Activated CD4-positive, alpha-beta memory T cell treated with anti-CD3 and anti-CD28 coated beads for 36 hours (primary cell): ENCODE measurements at regions of chr20 and their contacts with region 1.

Region 1: GRCh38 chr20:50120897-50121693 is 8.1 kb upstream of the UBE2V1 start:
- DNase-seq: peak; percentile 76
- H3K4me3 Mint-ChIP-seq: no peak overlapping the region
- H3K27ac Mint-ChIP-seq: no peak overlapping the region
- H3K4me1 Mint-ChIP-seq: peaks cover 8% of the 10 kb centered on the region
- H3K27me3 Mint-ChIP-seq: no peaks in the 10 kb centered on the region

Region 2: GRCh38 chr20:50133474-50134217 is 12.6 kb after region 1 on chr20:
- CTCF ChIA-PET with region 1: interaction called, 13 read pairs
- POLR2A ChIA-PET with region 1: interaction called, 3 read pairs
- intact Hi-C with region 1: no loop called
- DNase-seq: no peak
- H3K4me3 Mint-ChIP-seq: no peak overlapping the region
- H3K27ac Mint-ChIP-seq: no peak overlapping the region
- H3K4me1 Mint-ChIP-seq: peaks cover 13% of the 10 kb centered on the region
- H3K27me3 Mint-ChIP-seq: no peaks in the 10 kb centered on the region

Region 3: DNA sequence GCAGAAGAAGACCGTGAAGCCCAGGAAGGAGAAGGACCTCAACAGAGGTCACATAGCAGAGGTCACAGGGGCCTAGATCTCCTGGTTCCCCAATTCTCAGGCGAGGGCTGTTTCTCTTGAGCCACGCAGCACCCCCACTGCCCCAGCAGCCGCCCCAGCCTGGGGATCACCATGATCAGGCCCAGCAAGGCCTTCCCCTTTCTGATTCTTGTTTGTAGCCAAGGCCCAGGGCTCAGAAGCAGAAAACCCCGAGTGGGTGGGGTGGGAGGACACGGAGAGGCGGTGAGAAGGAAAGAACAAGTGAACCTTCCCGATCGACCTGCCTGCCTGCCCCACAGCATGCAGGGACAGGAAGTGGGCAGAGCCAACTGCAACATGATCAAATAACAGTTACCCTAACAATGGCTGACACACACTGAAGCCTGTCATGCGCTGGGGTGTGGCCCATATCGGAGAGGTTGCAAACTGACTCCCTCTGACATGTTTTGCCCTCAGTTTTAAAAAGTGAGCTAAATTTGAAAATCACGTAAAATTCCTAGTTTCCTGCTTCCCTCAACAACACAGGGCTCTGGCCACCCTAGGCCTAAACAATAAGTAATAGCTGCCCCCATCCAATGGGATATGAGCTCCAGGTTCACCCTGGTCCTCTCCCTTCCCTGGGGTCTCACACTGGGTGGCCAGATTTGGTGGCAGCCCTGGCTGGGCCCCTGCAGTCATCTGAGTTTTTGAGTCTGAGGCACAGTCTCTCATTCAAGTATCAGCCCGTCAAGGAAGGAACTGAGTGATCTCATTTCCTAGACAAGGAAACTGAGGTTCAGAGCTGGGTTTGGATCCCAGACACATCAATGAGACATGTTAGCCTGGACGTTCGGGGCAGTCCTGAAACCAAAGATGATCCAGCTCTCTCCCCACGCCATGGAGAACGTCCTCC is 25.9 kb after region 1 on chr20:
- CTCF ChIA-PET with region 1: interaction called, 26 read pairs
- POLR2A ChIA-PET with region 1: interaction called, 5 read pairs
- intact Hi-C with region 1: loop called (anchors 1 kb)
- DNase-seq: peak; percentile 89
- H3K4me3 Mint-ChIP-seq: peak overlapping the region; percentile 73
- H3K27ac Mint-ChIP-seq: peak overlapping the region; percentile 99
- H3K4me1 Mint-ChIP-seq: peaks cover 67% of the 10 kb centered on the region
- H3K27me3 Mint-ChIP-seq: no peaks in the 10 kb centered on the region

Region 4: GRCh38 chr20:50153485-50154377 is 32.6 kb after region 1 on chr20 and contains the start of gene PEDS1:
- CTCF ChIA-PET with region 1: interaction called, 26 read pairs
- POLR2A ChIA-PET with region 1: interaction called, 18 read pairs
- intact Hi-C with region 1: no loop called
- DNase-seq: peak; percentile 90
- H3K4me3 Mint-ChIP-seq: peak within 1 kb of the TSS; percentile 81
- H3K27ac Mint-ChIP-seq: peak within 1 kb of the TSS; percentile 70
- H3K4me1 Mint-ChIP-seq: peaks cover 43% of the 10 kb centered on the region
- H3K27me3 Mint-ChIP-seq: no peaks in the 10 kb centered on the region
- total RNA-seq, gene PEDS1: 15.0 to 16.9 TPM

Region 5: DNA sequence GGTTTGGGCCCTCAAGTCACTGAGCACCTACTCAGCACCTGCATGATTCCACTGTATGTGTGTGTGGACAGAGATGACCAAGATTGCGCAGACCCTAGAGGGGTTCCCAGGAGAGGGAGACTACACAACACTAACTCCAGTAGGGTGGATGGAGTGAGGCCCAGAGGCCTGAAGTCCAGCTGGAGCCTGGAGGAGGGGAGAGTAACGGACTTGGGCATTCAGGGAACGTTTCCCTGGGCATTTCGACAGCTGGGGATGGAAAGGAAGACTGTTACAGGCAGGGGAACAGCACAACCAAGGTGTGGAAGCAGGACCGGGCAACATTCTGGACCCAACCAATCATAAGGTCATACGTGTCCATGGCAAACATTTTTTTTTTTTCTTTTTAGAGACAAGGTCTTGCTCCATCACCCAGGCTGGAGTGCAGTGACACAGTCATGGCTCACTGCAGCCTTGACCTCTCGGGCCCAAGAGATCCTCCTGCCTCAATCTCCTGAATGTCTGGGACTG is 58.5 kb after region 1 on chr20:
- CTCF ChIA-PET with region 1: interaction called, 46 read pairs
- POLR2A ChIA-PET with region 1: no interaction called
- intact Hi-C with region 1: loop called (anchors 2 kb)
- DNase-seq: no peak
- H3K4me3 Mint-ChIP-seq: no peak overlapping the region
- H3K27ac Mint-ChIP-seq: no peak overlapping the region
- H3K4me1 Mint-ChIP-seq: no peaks in the 10 kb centered on the region
- H3K27me3 Mint-ChIP-seq: peaks cover 3% of the 10 kb centered on the region